Activated CD4-positive, alpha-beta T cell treated with anti-CD3 and anti-CD28 coated beads, Interleukin-2, amount 10 ng/mL, durations not matched to agents 24 days and 14 days (primary cell): ENCODE measurements at regions of chr9 and their contacts with region 1.

Region 1: DNA sequence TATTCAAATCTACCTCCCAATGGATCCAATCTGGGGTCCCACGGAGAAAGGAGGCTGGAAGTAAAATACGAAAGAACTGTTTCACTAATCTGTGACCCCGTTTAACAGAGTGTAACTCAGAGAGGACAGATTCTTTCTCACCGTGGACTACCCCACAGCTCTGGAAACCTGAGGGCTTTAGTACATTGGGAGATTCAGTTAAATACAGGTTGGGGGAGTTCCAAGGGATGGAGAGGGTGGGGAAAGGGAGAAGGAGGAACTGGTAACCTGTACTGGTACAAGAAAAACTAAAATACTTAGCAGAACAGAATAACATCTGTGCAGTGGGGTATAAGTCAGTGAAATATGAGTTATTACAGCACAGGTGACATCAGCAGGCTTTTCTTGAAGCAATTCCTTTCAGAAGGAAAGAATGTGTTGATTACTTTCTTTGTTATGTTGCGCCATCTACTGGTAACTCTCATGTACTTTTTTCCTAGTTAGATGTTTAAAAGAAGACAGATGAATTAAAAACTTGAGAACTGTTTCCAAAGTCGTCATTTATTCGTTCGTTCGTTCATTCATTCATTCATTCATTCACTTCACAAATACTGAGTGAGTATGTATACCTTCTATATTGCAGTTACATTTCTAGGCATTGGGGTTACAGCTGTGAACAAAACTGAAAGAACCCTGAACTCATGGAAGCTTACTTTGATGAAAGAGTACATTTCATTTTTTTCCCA is 30.0 kb upstream of the STOM start:
- DNase-seq: peak; percentile 68
- H3K4me3 Mint-ChIP-seq: no peak overlapping the region
- H3K27ac Mint-ChIP-seq: no peak overlapping the region
- H3K4me1 Mint-ChIP-seq: no peaks in the 10 kb centered on the region
- H3K27me3 Mint-ChIP-seq: peaks cover 18% of the 10 kb centered on the region

Region 2: DNA sequence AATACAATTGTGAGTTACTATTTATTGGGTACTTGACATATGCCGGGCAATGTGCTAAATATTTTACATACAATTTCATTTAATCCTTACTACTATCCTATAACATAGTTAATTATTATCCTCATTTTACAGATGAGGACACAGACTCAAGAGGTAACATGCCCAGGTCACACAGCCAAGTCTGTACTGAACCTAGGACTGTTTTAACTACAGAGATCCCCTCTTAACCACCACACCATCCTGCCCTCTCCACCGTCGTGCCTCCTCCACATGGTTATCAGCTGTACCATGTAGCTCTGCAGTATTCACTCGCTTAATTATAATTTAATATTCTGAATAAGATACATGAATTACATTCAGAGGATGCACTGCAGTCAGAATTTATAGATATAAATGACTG is 203.7 kb before region 1 on chr9:
- intact Hi-C with region 1: no loop called
- DNase-seq: no peak
- H3K4me3 Mint-ChIP-seq: no peak overlapping the region
- H3K27ac Mint-ChIP-seq: no peak overlapping the region
- H3K4me1 Mint-ChIP-seq: peaks cover 48% of the 10 kb centered on the region
- H3K27me3 Mint-ChIP-seq: no peaks in the 10 kb centered on the region

Region 3: DNA sequence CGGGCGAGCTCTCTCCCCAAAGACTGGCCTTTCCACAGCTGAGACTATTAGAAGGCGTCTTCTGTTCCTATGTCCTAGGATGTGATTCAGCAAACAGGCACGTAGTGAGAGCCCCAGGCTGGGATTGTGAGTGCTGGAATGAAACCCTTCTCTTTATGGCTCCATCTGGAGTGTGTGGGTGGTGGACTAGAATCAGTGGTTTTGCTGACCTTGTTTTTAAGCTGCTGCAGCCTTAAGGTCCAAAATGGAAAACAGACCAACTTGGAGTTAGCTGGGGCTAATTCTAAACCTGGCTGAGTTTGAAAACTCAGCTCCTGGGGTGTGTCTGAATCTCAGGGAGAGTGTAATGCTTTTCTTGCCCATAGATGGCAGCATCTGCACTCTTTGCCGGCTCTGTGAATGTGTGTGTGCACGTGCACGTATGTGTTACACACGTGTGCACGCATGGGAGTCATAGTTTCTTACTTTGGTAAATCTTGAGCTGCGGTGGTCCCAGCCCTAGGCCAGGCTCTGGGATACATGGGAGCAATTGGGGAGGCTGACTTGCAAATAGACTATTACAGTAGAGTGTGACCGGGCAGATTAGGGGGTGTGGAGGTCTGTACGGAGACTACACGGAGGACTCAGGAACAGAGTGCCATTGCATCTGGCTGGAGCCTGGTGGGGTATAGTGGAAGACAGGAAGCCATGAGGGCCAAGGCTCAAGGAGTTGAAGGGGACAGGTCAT is 121.3 kb before region 1 on chr9:
- intact Hi-C with region 1: loop called (anchors 2 kb)
- DNase-seq: peak; percentile 82
- H3K4me3 Mint-ChIP-seq: no peak overlapping the region
- H3K27ac Mint-ChIP-seq: peak overlapping the region; percentile 8
- H3K4me1 Mint-ChIP-seq: peaks cover 14% of the 10 kb centered on the region
- H3K27me3 Mint-ChIP-seq: peaks cover 2% of the 10 kb centered on the region

Region 4: GRCh38 chr9:121326130-121326838 is 73.8 kb before region 1 on chr9:
- intact Hi-C with region 1: no loop called
- DNase-seq: no peak
- H3K4me3 Mint-ChIP-seq: no peak overlapping the region
- H3K27ac Mint-ChIP-seq: no peak overlapping the region
- H3K4me1 Mint-ChIP-seq: peaks cover 14% of the 10 kb centered on the region
- H3K27me3 Mint-ChIP-seq: no peaks in the 10 kb centered on the region